Endothelial cell of umbilical vein (primary cell): ENCODE measurements at regions of chr17 and their contacts with region 1.

Region 1: DNA sequence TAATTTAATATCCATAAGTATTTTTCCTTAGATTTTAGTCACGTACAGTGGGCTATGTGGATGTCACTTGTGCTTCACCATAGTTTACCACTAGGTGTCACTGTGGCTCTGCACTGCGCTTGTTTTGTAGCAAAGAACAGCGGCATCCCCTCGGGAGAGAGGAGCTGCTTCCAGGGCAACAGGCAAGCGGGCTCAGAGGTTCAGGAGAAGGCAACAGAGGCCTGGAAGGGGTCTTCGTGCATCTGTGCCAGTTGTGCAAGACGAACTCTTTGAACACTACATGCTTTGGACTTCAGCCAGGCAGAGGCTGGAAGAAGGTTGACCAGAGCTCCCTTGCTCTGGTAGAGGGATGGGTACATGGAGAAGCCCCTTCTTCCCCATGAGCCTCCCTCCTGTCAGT is 20.6 kb downstream of the CYB561 start:
- DNase-seq: peak; percentile 87
- H3K4me3 ChIP-seq: no peak overlapping the region
- H3K27ac ChIP-seq: no peak overlapping the region
- H3K4me1 ChIP-seq: peaks cover 30% of the 10 kb centered on the region
- H3K27me3 ChIP-seq: no peaks in the 10 kb centered on the region
- CTCF ChIP-seq: peak; percentile 76 to 79
- POLR2A ChIP-seq: no peak

Region 2: GRCh38 chr17:63445979-63446691 is 20.7 kb after region 1 on chr17 and contains the start of gene CYB561:
- CTCF ChIA-PET with region 1: interaction called, 66 read pairs
- POLR2A ChIA-PET with region 1: interaction called, 3 read pairs
- dilution Hi-C with region 1: no loop called
- intact Hi-C with region 1: loop called (anchors 1 kb)
- DNase-seq: peak; percentile 63
- H3K4me3 ChIP-seq: peak within 1 kb of the TSS; percentile 2 to 49 (median 44)
- H3K27ac ChIP-seq: peak within 1 kb of the TSS; percentile 80
- H3K4me1 ChIP-seq: peaks cover 41% of the 10 kb centered on the region
- H3K27me3 ChIP-seq: no peaks in the 10 kb centered on the region
- CTCF ChIP-seq: peak; percentile 29 to 61
- POLR2A ChIP-seq: no peak
- total RNA-seq, gene CYB561: 71.1 and 72.4 TPM in 2 replicates

Region 3: DNA sequence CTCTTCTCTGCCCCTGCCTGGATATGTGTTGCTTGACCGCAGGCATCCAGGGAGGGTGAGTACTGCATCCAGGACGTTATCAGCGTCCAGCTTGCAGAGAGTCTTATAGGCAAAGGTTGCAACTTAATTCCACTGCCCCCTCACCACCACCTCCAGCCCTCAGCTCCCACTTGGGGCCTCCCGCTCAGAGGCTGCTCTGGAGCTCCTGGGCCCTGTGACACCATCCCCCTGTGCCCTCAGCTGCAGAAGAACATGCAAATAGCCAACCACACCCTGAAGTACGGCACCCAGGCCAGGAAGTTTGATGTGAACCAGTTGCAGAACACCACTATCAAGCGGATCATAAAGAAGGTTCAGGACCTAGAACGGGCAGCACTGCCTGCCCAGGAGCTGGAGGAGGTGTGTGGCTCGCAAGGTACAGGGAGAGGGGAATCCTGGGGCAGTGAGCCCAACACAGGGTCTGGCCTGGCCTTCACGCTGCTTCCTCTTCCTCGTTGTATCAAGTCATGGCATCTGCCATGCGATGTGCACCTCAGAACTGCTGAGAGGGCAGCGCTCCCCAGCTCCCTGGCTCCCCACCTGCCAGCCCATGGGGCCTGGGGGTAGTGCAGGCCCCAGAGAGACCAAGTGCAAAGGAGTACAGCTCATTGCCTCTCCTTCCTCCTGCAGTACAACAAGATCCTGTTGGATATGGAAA is 61.0 kb after region 1 on chr17:
- CTCF ChIA-PET with region 1: interaction called, 540 read pairs
- POLR2A ChIA-PET with region 1: interaction called, 4 read pairs
- dilution Hi-C with region 1: no loop called
- intact Hi-C with region 1: no loop called
- DNase-seq: no peak
- H3K4me3 ChIP-seq: no peak overlapping the region
- H3K27ac ChIP-seq: no peak overlapping the region
- H3K4me1 ChIP-seq: no peaks in the 10 kb centered on the region
- H3K27me3 ChIP-seq: no peaks in the 10 kb centered on the region
- CTCF ChIP-seq: no peak
- POLR2A ChIP-seq: no peak

Region 4: GRCh38 chr17:63592797-63593472 is 167.5 kb after region 1 on chr17:
- CTCF ChIA-PET with region 1: interaction called, 12 read pairs
- POLR2A ChIA-PET with region 1: no interaction called
- dilution Hi-C with region 1: no loop called
- intact Hi-C with region 1: no loop called
- DNase-seq: no peak
- H3K4me3 ChIP-seq: no peak overlapping the region
- H3K27ac ChIP-seq: no peak overlapping the region
- H3K4me1 ChIP-seq: peaks cover 15% of the 10 kb centered on the region
- H3K27me3 ChIP-seq: no peaks in the 10 kb centered on the region
- CTCF ChIP-seq: no peak
- POLR2A ChIP-seq: no peak

Region 5: GRCh38 chr17:63621766-63622519 is 196.5 kb after region 1 on chr17 and contains the start of gene MAP3K3:
- CTCF ChIA-PET with region 1: interaction called, 31 read pairs
- POLR2A ChIA-PET with region 1: no interaction called
- dilution Hi-C with region 1: no loop called
- intact Hi-C with region 1: no loop called
- DNase-seq: peak; percentile 100
- H3K4me3 ChIP-seq: peak within 1 kb of the TSS; percentile 78 to 97 (median 80)
- H3K27ac ChIP-seq: peak within 1 kb of the TSS; percentile 53
- H3K4me1 ChIP-seq: peaks cover 27% of the 10 kb centered on the region
- H3K27me3 ChIP-seq: no peaks in the 10 kb centered on the region
- CTCF ChIP-seq: peak in 1 of 2 donors; percentile 24
- POLR2A ChIP-seq: peak; percentile 93
- total RNA-seq, gene MAP3K3: 81.0 and 91.4 TPM in 2 replicates

Region 6: DNA sequence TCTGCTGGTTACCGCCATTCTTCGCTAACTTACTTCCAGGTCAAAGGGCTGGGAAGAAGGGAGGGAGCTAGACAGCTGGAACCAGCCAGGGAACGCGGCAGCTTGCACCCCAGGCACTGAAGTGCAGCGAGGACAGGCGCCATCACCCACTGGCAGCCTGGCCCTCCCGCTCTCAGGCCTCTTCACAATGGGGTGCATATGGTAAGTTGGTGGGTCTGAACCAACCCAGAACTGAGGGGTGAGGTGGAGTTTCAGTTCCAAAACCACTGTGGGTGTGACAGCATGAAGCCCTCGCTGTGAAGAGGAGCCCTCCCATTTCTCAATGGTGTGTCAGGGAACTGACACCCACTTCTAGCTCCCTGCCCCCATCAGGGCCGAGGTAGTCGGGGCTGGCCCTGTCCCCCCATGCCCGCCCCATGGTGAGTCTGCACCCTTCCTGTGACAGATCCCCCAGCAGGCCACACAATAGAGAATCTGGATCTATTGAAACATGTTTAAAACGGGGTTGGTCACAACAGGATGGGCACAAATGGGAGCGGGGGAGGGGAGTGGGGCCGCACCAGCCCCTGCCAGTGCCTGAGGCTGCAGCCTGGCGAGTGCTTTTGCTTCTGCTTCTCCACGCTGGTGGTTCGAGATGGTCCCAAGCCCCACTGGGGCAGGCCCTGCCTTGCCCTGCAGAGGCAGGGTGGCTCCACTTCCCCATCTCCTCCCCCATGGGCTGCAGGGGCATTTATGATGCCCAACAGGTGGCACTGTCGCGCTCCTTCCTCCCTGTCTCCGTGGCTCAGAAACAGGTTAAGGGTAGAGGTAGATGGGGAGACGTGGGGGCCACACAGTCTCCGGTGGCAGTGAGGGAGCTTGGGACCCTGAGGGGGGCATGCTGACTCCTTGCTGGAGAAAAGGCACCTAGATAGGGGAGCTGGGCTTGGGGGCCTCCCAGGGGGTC is 272.1 kb after region 1 on chr17:
- CTCF ChIA-PET with region 1: interaction called, 36 read pairs
- POLR2A ChIA-PET with region 1: no interaction called
- dilution Hi-C with region 1: no loop called
- intact Hi-C with region 1: loop called (anchors 1 kb)
- DNase-seq: peak; percentile 44
- H3K4me3 ChIP-seq: no peak overlapping the region
- H3K27ac ChIP-seq: no peak overlapping the region
- H3K4me1 ChIP-seq: peaks cover 20% of the 10 kb centered on the region
- H3K27me3 ChIP-seq: no peaks in the 10 kb centered on the region
- CTCF ChIP-seq: peak; percentile 41 to 61
- POLR2A ChIP-seq: peak; percentile 15